GM12878 (cell line): ENCODE measurements at regions of chr12 and their contacts with region 1.

Region 1: GRCh38 chr12:93397412-93397811 is 19.7 kb downstream of the NUDT4 start:
- DNase-seq: no peak
- ATAC-seq: no peak
- H3K4me3 ChIP-seq: no peak overlapping the region
- H3K27ac ChIP-seq: no peak overlapping the region
- H3K4me1 ChIP-seq: no peaks in the 10 kb centered on the region; the same call in 1 of the 2 replicates
- H3K27me3 ChIP-seq: no peaks in the 10 kb centered on the region
- CTCF ChIP-seq: no peak
- EP300 ChIP-seq: no peak
- POLR2A ChIP-seq: no peak
- RAD21 ChIP-seq: no peak

Region 2: DNA sequence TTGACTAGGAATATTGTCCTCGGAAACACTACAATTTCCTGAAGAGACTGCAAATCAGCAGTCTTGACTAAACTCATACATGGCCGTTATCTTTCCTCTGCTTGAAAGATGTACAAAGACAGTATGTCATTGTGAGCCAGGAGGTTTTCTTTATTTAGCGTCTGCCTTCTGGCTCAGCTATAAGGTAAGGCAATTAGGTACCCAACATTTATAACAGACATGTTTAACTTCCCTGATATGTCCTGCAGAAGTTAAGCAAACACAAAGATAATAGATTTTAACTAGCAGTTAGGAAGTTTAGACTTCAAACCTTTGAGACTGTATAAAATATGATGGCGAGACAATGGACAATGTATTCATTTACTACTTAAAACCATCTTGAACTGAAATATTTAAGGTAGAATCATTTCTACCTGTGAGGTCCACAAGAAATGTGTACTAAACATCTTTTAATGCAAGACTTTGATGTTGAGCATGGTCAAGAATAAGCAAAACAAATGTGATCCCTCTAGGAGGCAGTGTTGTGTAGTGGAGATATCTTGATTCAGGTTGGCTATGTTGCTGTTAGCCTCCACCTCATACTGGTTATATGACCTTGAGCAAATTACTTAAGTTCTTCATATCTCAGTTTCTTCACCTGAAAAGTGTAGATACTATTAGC is 372.1 kb before region 1 on chr12:
- CTCF ChIA-PET with region 1: interaction called, 22 read pairs
- POLR2A ChIA-PET with region 1: no interaction called
- RAD21 ChIA-PET with region 1: interaction called, 9 read pairs
- SMC1A ChIA-PET with region 1: interaction called, 23 read pairs
- in situ Hi-C with region 1: loop called (anchors 5 kb)
- intact Hi-C with region 1: loop called (anchors 2 kb)
- DNase-seq: peak; percentile 63
- ATAC-seq: peak; percentile 99
- H3K4me3 ChIP-seq: no peak overlapping the region
- H3K27ac ChIP-seq: no peak overlapping the region
- H3K4me1 ChIP-seq: no peaks in the 10 kb centered on the region
- H3K27me3 ChIP-seq: no peaks in the 10 kb centered on the region
- CTCF ChIP-seq: peak; percentile 61 to 70 (median 69); a peak in 5 of 6 replicates
- EP300 ChIP-seq: no peak
- POLR2A ChIP-seq: no peak
- RAD21 ChIP-seq: peak; percentile 91

Region 3: DNA sequence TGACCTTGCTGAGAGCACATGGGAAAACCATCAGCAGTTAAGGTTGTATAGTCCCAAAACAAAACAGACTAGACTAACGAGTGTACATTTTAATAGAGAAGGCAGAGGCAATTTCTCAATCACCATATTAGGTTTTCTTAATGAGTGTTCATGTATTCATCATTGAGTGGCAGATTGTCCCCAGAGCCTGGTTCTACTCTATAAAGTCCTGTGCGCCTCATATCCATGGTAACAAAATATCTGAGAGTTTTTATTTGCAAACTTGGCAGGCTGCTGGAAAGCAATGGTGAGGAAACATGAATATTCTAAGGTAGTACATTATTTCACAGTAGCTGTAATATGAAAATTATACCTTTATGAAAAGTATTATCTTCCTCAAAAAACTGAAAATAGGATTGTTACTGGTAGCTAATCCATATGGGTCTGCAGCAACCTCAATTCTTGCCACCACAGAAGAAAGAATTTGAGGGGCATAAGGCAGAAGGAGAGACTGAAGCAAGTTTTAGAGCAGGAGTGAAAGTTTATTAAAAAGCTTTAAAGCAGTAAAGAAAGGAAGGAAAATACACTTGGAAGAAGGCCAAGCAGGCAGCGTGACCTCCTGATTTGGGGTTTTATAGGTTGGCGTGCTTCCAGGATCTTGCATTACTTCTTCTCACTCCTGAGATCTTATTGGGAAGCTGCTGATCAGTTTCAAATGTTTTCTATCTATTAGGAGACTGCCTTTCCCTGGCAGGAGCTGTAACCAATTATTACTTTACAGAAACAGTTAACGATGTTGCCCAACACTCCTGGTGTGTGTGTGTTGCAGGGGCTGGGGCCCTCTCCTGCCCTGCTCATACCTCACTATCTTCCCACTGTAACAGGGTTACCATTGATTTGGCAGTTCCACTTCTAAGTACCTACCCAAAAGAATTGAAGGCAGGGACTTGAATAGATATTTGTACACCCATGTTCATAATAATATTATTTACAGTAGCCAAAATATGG is 173.7 kb before region 1 on chr12:
- CTCF ChIA-PET with region 1: no interaction called
- POLR2A ChIA-PET with region 1: no interaction called
- RAD21 ChIA-PET with region 1: no interaction called
- SMC1A ChIA-PET with region 1: no interaction called
- in situ Hi-C with region 1: no loop called
- intact Hi-C with region 1: no loop called
- DNase-seq: no peak
- ATAC-seq: no peak
- H3K4me3 ChIP-seq: no peak overlapping the region
- H3K27ac ChIP-seq: no peak overlapping the region
- H3K4me1 ChIP-seq: no peaks in the 10 kb centered on the region; the same call in 1 of the 2 replicates
- H3K27me3 ChIP-seq: no peaks in the 10 kb centered on the region
- CTCF ChIP-seq: no peak
- EP300 ChIP-seq: no peak
- POLR2A ChIP-seq: no peak
- RAD21 ChIP-seq: no peak

Region 4: GRCh38 chr12:93603762-93604161 is 206.3 kb after region 1 on chr12:
- CTCF ChIA-PET with region 1: no interaction called
- POLR2A ChIA-PET with region 1: no interaction called
- RAD21 ChIA-PET with region 1: no interaction called
- SMC1A ChIA-PET with region 1: no interaction called
- in situ Hi-C with region 1: no loop called
- intact Hi-C with region 1: no loop called
- DNase-seq: no peak
- ATAC-seq: no peak
- H3K4me3 ChIP-seq: no peak overlapping the region
- H3K27ac ChIP-seq: no peak overlapping the region
- H3K4me1 ChIP-seq: no peaks in the 10 kb centered on the region
- H3K27me3 ChIP-seq: no peaks in the 10 kb centered on the region
- CTCF ChIP-seq: no peak
- EP300 ChIP-seq: no peak
- POLR2A ChIP-seq: no peak
- RAD21 ChIP-seq: peak; percentile 18; the same call in 1 of the 2 replicates